ENCODE measurements at regions of chr5 and their contacts with region 1.

Region 1: GRCh38 chr5:151825445-151825844 is 53.7 kb downstream of the G3BP1 start:
- DNase-seq: peak in 21 of 35 experiments; percentile 1 to 66 (median 19)
- ATAC-seq: peak in 2 of 4 experiments; percentile 29 to 46
- H3K4me3 ChIP-seq: no peak overlapping the region
- H3K4me3 Mint-ChIP-seq: no peak overlapping the region
- H3K27ac ChIP-seq: no peak overlapping the region
- H3K27ac Mint-ChIP-seq: no peak overlapping the region
- H3K4me1 ChIP-seq: no peaks in the 10 kb centered on the region
- H3K4me1 Mint-ChIP-seq: peaks cover 3 to 11% (median 6%) of the 10 kb centered on the region in 3 donors
- H3K27me3 ChIP-seq: no peaks in the 10 kb centered on the region
- H3K27me3 Mint-ChIP-seq: no peaks in the 10 kb centered on the region

Region 2: DNA sequence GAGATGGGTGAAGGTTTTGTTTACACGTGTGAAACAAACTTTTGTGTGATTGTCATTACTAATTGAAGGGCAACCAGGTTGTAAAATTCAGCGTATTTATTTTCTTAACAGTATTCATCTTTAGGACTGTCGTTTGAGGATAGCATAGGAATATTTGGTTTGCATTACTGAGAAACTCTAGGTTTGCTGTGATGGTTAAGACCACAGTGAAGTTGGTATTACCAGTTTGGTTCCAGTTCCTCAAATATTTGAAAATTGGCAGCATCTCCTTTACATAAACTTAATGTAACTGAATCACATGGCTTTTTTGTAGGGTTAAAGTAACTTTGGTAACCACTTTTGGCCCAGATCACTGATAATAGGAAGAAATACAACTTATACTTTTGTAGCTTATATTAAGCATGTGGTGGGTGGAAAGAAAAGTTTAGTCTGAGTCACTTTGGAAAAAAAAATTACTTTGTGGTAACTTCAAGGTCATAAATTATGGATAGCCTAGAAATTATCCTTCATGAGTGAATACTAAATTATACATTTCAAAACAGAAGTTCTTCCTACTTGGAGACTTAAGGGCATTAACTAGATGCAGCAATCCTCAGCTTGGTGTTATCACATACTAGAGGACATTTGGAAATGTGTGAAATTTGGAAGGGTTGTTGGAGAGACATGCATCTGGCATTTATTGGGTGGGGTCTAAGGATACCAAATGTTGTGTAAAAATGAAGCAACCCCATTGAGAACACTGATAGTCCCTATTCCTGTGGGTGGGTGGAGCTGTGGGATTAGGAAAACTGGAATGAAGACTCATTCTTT is 19.8 kb before region 1 on chr5:
- CTCF ChIA-PET with region 1: no interaction called
- POLR2A ChIA-PET with region 1: no interaction called
- DNase-seq: no peak
- ATAC-seq: no peak
- H3K4me3 ChIP-seq: no peak overlapping the region
- H3K4me3 Mint-ChIP-seq: no peak overlapping the region
- H3K27ac ChIP-seq: no peak overlapping the region
- H3K27ac Mint-ChIP-seq: no peak overlapping the region
- H3K4me1 ChIP-seq: no peaks in the 10 kb centered on the region
- H3K4me1 Mint-ChIP-seq: peaks cover 0 to 25% (median 16%) of the 10 kb centered on the region in 3 donors
- H3K27me3 ChIP-seq: no peaks in the 10 kb centered on the region
- H3K27me3 Mint-ChIP-seq: no peaks in the 10 kb centered on the region

Region 3: GRCh38 chr5:152142840-152143469 is 317.5 kb after region 1 on chr5:
- CTCF ChIA-PET with region 1: interaction called, 16 to 138 read pairs
- POLR2A ChIA-PET with region 1: no interaction called
- DNase-seq: peak; percentile 12 to 79 (median 54)
- ATAC-seq: peak; percentile 52 to 71 (median 63)
- H3K4me3 ChIP-seq: no peak overlapping the region
- H3K4me3 Mint-ChIP-seq: no peak overlapping the region
- H3K27ac ChIP-seq: no peak overlapping the region
- H3K27ac Mint-ChIP-seq: no peak overlapping the region
- H3K4me1 ChIP-seq: no peaks in the 10 kb centered on the region
- H3K4me1 Mint-ChIP-seq: no peaks in the 10 kb centered on the region
- H3K27me3 ChIP-seq: no peaks in the 10 kb centered on the region
- H3K27me3 Mint-ChIP-seq: peaks cover 0 to 6% of the 10 kb centered on the region in 2 donors

Region 4: GRCh38 chr5:152349683-152350526 is 524.5 kb after region 1 on chr5:
- CTCF ChIA-PET with region 1: interaction called in 1 of 2 experiments, 19 read pairs
- POLR2A ChIA-PET with region 1: no interaction called
- DNase-seq: peak in 13 of 35 experiments; percentile 0 to 27 (median 3)
- ATAC-seq: peak in 1 of 4 experiments; percentile 44
- H3K4me3 ChIP-seq: no peak overlapping the region
- H3K4me3 Mint-ChIP-seq: no peak overlapping the region
- H3K27ac ChIP-seq: no peak overlapping the region
- H3K27ac Mint-ChIP-seq: no peak overlapping the region
- H3K4me1 ChIP-seq: no peaks in the 10 kb centered on the region
- H3K4me1 Mint-ChIP-seq: no peaks in the 10 kb centered on the region
- H3K27me3 ChIP-seq: no peaks in the 10 kb centered on the region
- H3K27me3 Mint-ChIP-seq: peaks cover 0 to 1% of the 10 kb centered on the region in 2 donors